Posterior vena cava (tissue), 2 donors: ENCODE measurements at regions of chr20 and their contacts with region 1.

Region 1: GRCh38 chr20:6265204-6265904 is 142.5 kb upstream of the FERMT1 start:
- DNase-seq: no peak

Region 2: DNA sequence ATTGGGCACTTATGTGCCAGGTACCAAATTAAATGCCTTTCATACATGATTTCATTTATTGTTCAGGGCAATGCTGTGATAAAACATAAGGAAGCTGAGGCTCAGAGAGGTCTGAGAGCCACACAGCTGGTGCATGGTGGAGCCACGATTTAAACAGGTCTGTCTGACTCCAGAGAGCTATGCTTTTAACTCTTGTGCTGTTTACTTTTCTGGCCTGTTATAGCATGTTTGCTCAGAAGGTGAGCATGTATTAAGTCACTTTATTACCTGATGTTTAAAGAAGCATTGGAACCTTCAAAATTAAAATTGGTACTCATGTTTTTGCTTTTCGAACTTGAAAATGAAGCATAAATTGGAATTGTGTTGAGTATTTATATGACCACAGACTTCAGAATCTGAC is 288.1 kb before region 1 on chr20:
- intact Hi-C with region 1: loop called in 1 of 2 experiments (anchors 5 kb)
- DNase-seq: no peak

Region 3: DNA sequence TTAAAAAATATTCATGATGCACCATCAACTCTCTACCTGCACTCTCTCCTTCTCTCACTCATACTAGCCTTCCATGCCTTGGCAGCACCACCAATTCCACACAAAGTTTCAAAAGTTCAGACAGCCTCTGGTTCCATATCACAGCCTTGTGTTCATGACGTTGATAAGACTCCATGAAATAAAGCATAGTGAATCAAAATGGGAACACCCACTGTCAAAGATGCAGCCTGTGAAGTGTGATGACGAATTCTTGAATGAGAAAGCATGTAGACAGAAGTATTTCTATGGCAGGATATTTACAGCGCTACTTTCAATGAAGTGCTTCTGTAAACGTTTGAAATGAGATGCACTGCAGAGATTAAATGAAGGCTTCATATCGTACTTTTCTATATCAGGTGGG is 65.3 kb before region 1 on chr20:
- intact Hi-C with region 1: no loop called
- DNase-seq: no peak